PC-3 (cell line): ENCODE measurements at regions of chr4 and their contacts with region 1.

Region 1: GRCh38 chr4:138445098-138445497 is 202.9 kb upstream of the SLC7A11 start:
- DNase-seq: no peak
- ATAC-seq: no peak
- H3K4me3 ChIP-seq: no peak overlapping the region
- H3K27ac ChIP-seq: no peak overlapping the region
- H3K4me1 ChIP-seq: no peaks in the 10 kb centered on the region
- H3K27me3 ChIP-seq: no peaks in the 10 kb centered on the region
- CTCF ChIP-seq: no peak

Region 2: DNA sequence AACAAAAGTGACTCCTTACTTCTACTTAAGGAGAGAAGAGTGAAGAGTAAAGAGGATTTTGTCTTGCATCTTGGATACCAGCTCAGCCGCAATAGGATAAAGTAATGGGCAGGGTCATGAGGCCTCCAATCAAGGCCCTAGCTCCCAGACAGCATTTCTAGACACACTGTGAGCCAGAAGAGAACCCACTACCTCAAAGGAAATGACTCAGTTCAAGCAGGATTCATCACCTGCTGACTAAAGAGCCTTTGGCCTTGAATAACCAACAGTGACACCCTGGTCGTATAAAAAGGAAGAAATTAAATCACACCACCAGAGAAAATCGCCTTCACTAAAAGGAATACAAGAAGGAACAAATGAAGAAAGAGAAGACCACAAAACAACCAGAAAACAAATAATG is 1329.0 kb before region 1 on chr4:
- CTCF ChIA-PET with region 1: no interaction called
- POLR2A ChIA-PET with region 1: interaction called, 10 read pairs
- intact Hi-C with region 1: no loop called
- DNase-seq: peak; percentile 42
- ATAC-seq: peak; percentile 55
- H3K4me3 ChIP-seq: no peak overlapping the region
- H3K27ac ChIP-seq: no peak overlapping the region
- H3K4me1 ChIP-seq: peaks cover 4% of the 10 kb centered on the region; the same call in 1 of the 2 replicates
- H3K27me3 ChIP-seq: no peaks in the 10 kb centered on the region
- CTCF ChIP-seq: no peak

Region 3: DNA sequence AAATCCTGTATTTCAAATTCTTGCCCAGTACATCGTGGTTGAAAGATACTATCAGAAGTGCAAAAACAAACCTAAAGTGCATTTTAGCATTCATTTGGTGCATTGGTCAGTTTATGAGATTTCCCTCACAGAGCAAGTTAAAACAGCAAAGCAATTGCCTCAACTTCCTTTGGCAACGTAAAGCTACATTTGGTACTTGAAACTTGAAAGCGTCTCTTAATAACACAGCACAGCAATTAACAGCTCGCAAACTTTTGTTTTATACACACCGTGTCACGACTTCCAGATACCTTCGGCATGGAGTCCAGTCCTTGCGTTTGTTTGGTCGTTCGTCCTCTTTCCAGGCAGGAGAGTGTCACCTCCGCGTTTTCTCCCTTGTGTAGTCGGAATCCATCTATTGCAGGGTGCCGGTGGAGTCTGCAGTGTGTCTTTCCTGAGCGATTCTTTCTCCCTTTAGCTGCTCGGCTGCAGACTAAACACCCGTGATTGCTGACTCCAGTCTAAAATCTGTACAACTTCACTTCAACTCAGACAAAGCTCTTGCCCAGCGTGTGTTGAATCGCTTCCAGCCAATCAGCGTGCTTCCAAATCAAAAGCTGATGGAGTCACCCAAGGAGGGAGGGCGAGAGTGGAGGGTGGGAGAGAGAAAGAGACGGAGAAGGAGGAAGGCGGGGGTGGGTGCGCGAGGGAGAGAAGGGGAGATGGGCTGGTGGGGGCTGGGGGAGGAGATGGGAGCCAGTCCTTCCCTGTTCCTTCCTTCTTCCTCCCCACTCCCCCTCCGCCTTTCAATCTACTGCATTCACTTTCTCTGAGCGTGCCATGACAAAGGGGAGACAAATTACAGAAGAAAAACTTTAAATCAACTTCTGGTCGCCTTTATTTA is 912.9 kb before region 1 on chr4 and contains the start of gene PCDH18:
- CTCF ChIA-PET with region 1: no interaction called
- POLR2A ChIA-PET with region 1: no interaction called
- intact Hi-C with region 1: no loop called
- DNase-seq: peak; percentile 75
- ATAC-seq: peak; percentile 75
- H3K4me3 ChIP-seq: peak within 1 kb of the TSS; percentile 97
- H3K27ac ChIP-seq: peak within 1 kb of the TSS; percentile 17; the same call in 1 of the 2 replicates
- H3K4me1 ChIP-seq: peaks cover 14% of the 10 kb centered on the region; the same call in 1 of the 2 replicates
- H3K27me3 ChIP-seq: no peaks in the 10 kb centered on the region
- CTCF ChIP-seq: no peak
- total RNA-seq, gene PCDH18: 1.6 and 2.0 TPM in 2 replicates

Region 4: GRCh38 chr4:138259801-138260200 is 185.3 kb before region 1 on chr4:
- CTCF ChIA-PET with region 1: no interaction called
- POLR2A ChIA-PET with region 1: no interaction called
- intact Hi-C with region 1: no loop called
- DNase-seq: peak; percentile 65
- ATAC-seq: peak; percentile 56
- H3K4me3 ChIP-seq: no peak overlapping the region
- H3K27ac ChIP-seq: no peak overlapping the region
- H3K4me1 ChIP-seq: peaks cover 33% of the 10 kb centered on the region
- H3K27me3 ChIP-seq: no peaks in the 10 kb centered on the region
- CTCF ChIP-seq: no peak

Region 5: DNA sequence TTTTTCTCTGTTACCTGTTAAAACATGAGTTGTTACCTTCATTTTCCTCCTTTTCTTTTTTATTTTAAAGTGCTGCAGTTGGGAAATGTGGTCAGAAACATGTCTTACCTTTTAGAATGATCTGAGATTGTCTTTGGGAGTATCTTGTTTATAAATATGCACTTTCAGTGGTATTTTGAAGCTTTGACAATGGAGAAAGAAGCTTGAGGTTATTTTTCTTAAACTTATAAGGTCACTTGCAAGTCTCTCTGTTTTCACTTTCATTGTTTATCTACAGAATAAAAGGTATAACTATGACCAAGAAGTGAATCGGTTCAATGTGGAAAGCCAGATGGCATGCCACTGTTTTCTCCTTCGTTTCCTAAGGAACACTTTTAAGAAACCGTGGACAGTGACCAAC is 35.4 kb before region 1 on chr4:
- CTCF ChIA-PET with region 1: no interaction called
- POLR2A ChIA-PET with region 1: no interaction called
- intact Hi-C with region 1: no loop called
- DNase-seq: no peak
- ATAC-seq: no peak
- H3K4me3 ChIP-seq: no peak overlapping the region
- H3K27ac ChIP-seq: no peak overlapping the region
- H3K4me1 ChIP-seq: peaks cover 14% of the 10 kb centered on the region
- H3K27me3 ChIP-seq: no peaks in the 10 kb centered on the region
- CTCF ChIP-seq: no peak